ENCODE measurements at regions of chr1 and their contacts with region 1.

Region 1: GRCh38 chr1:74771913-74772515 is 39.1 kb downstream of the TYW3 start:
- DNase-seq: peak; percentile 7
- CTCF ChIP-seq: peak; percentile 59

Region 2: DNA sequence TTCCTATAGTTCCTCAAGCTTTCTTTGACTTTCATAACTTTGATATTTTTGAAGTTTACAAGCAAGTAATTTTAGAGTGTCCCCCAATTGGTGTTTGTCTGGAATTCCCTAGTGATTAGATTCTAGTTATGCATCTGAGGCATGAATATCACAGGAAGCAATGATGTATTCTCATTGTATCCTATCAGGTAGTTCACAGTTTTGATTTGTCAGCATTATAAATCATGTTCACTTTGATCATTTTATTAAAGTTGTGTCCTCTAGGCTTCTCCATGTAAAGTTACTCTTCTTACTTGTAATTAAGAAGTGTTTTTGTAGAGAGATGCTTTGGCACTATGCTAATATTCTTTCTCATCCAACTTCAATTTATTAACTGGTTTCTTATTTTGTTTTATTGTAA is 13.9 kb after region 1 on chr1:
- CTCF ChIA-PET with region 1: interaction called, 17 read pairs
- POLR2A ChIA-PET with region 1: no interaction called
- DNase-seq: no peak
- CTCF ChIP-seq: no peak

Region 3: DNA sequence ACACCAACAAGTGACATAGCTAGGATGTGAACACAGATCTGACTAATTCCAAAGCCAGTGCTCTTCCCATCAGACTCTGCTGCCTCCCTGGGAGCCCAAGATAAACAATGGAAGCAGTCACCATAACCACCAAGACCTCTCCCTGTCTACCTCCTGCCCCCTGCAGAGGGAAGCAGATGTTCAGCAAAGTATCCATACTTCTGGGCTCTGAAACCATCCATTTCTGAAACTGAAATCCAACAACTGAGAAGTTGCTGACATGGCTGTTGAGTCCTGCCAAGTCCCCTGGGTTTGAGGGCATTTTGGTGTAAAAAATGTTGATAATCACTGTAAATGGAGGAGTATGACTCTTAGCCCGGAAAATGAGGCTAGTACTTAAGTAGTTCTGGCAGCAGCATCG is 63.0 kb after region 1 on chr1:
- CTCF ChIA-PET with region 1: no interaction called
- POLR2A ChIA-PET with region 1: no interaction called
- DNase-seq: no peak
- CTCF ChIP-seq: no peak

Region 4: GRCh38 chr1:74869702-74870101 is 97.7 kb after region 1 on chr1:
- CTCF ChIA-PET with region 1: no interaction called
- POLR2A ChIA-PET with region 1: no interaction called
- DNase-seq: no peak
- CTCF ChIP-seq: no peak

Region 5: GRCh38 chr1:75083848-75084514 is 312.0 kb after region 1 on chr1:
- CTCF ChIA-PET with region 1: no interaction called
- POLR2A ChIA-PET with region 1: no interaction called
- DNase-seq: no peak
- CTCF ChIP-seq: no peak

Region 6: GRCh38 chr1:75203415-75204277 is 431.6 kb after region 1 on chr1:
- CTCF ChIA-PET with region 1: interaction called, 104 read pairs
- POLR2A ChIA-PET with region 1: no interaction called
- DNase-seq: peak; percentile 26
- CTCF ChIP-seq: peak; percentile 42

Region 7: DNA sequence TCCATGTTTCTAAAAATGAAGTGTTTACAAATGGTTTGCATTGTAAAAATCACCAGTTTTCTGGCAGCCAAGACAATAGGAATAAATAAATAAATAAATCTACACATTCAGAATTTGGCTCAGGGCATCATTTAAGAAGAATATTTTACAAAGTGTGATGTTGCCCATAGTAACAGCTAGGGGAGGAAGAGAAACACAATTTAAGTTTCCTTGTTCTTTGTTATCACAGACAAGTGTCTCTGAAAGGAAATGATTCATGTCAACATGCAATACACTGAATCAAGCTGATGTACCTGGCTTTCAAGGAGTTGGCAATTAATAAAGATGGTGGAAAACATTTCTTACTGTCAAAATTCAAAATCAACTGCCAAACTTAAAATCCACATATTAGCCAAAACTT is 436.8 kb after region 1 on chr1:
- CTCF ChIA-PET with region 1: interaction called, 104 read pairs
- POLR2A ChIA-PET with region 1: no interaction called
- DNase-seq: no peak
- CTCF ChIP-seq: no peak